Posterior cingulate gyrus (tissue), 11 donors: ENCODE measurements at regions of chr5 and their contacts with region 1.

Region 1: DNA sequence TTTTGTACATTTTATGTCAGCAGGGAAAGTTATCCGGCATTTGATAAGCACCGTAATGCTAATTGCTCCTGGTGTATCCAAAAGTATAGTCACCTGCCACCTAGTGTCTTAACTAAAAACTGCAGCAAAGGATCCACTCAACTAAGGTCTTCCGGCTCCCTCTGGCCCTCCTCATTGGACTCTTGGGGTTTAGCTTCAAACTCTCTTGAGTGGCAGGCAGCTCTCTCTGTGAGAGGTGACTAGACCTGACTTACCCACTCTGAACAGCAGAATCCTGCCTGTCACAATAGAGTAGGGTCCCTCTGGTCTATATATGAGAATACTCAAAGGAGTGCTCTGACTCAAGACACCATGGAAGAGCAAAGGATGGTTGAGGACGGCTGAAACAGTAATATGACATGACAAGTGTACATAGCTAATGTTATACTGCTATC is 60.3 kb upstream of the CAST start:
- DNase-seq: peak in 3 of 10 donors; percentile 14 to 26 (median 20)

Region 2: DNA sequence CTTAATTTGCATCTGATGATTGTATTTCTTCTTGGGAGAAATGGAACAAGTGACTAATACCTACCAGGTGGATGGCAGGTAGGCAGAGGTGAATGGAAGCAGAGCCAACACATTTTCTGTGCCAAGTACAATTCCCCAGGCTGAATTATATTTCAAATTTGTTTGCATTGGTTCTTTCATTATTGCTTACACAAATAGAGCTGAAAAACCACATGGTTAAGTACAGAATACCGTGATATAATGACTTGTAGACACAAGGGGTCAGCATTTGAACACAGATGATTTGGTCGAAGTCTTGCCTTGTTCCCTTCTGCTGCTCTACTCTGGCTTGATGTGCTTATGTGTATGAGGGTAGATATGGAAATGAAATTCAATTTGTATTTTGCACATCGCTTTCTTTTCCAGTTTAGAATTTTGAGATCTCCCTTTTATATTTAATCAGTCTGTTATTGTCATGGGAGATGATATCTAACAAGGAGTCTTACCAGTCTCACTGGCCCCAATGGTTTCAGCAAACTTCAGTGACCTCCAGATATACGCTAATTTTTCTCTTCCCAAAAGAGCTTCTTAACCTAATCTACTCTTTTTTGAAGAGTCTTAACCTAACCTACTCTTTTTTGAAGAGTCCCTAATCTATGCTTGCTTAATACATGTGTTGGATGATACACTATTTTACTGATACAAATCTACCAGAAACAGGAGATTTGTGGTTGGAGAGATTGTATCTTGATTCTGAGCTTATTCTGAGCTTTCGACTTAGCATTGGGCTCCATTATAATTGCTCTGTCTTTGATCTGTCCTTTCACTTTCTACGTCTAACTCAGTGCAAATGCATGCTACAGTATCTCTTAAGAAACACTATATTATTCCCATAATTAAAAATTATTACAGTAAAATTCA is 256.9 kb before region 1 on chr5:
- intact Hi-C with region 1: loop called (anchors 1 kb)
- DNase-seq: no peak

Region 3: GRCh38 chr5:96492654-96493053 is 109.2 kb before region 1 on chr5:
- intact Hi-C with region 1: no loop called
- DNase-seq: no peak

Region 4: DNA sequence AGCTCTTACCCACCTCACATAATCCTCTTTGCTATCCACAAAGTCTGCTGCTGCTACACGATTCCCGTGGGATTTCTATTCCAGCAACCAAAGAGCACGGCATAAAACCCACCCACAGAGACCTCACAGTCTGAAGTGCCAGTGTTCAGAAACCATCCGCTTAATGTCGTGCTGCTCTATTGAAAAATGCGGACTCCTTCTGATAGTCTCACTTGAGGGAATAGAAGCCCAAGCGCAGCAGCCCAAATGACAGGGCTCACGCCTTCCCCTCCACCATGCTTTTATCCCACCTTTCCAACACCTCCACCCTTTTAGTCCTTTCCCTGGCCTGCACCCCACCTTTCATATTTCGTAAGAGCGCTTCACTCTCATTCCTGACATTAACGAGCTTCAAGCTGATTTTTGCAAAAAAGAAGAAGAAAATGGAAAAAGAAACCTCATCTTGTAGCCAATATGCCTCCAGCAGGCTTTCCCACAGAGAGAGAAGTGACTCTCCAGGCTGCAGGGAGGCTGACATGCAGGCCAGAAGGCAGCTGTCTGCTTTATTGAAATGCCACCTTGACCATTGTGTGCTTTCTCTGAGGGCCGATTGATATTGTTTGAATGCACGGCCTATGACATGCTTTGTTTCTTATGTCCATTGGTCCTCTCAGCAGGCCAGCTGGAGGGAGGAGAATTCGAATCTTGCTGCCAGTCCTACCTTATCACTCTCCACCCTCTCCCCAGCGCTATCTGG is 98.2 kb before region 1 on chr5:
- intact Hi-C with region 1: no loop called
- DNase-seq: no peak

Region 5: DNA sequence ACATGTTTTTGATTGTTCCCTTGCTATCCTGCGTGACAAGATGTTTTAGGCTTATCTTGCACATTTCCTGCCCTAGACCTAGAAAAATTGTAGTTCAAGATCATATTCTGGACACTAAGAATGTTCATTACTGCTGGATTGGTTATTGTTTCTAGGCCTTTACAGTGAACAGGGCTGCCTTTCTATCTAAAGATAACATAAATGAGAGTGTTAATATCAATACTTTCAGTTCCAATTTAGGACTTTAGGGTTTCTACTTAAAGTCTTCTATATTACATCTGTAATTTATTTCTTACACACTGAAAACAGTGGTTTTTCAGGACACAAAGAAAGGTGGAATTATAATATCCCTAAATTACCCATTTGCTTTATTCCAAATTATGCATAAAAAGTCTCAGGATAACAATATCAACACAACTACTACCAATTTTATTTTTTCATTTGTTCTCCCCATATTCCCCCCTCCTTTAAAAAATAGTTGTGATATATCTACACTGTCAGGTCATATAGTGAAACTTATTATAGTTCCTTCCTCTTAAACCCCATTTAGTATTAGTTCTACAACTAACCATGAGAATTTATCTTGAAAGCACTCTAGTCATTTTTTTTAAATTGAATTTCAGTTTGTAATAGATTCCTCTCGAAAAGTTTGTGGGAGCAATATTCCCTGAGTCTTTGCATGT is 875.2 kb after region 1 on chr5:
- intact Hi-C with region 1: no loop called
- DNase-seq: no peak